ENCODE measurements at regions of chr10 and their contacts with region 1.

Region 1: DNA sequence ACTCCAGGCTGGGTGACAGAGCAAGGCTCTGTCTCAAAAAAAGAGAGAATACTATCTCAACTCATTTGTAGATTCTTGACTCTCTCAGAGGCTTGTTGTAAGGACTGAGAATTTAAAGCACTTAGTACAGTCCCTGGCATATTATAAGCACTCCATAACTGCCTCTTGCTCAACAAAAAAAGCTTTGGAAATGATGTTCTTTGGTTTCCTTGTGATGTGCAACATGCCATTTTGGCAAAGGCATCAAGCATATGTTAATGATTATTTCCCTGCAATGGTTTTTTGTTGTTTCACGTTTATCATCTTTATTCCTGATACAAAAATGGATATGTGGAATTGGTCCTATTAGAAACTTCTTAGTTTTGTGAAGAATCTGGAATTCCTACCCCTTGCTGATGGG is 15.7 kb downstream of the NOLC1 start:
- DNase-seq: no peak
- ATAC-seq: no peak
- H3K4me3 Mint-ChIP-seq: no peak overlapping the region
- H3K27ac Mint-ChIP-seq: no peak overlapping the region
- H3K4me1 Mint-ChIP-seq: peaks cover 15% of the 10 kb centered on the region
- H3K27me3 Mint-ChIP-seq: no peaks in the 10 kb centered on the region

Region 2: DNA sequence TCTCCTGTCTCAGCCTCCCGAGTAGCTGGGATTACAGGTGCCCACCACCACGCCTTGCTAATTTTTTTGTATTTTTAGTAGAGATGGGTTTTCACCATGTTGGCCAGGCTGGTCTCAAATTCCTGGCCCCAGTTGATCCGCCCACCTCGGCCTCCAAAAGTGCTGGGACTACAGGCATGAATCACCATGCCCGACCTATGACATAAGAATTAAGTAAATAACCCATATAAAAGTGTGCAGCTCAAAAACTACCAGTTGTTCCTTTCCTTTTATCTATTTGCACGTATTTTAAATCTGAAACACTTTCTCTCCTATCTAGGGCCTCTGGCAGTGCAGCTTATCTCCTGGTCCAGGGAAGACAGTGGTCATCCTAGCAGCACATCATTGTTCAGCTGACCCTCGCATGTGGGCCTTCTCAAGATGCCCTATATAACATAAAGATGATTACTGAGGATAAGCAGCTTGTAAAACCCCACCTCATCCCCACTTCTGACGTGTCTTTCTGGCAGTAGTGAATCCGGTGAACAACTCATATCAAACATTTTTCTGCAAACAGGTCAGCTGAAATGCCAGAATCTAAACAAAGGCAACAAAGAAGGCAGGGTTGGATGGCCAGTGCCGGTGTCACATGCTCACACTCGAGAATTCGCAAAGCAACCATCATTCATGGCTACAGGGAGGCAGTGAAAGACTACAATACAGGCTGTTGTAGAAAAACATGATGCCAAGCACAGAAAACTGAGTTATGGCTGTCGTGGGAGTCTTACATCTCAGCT is 288.2 kb before region 1 on chr10:
- CTCF ChIA-PET with region 1: no interaction called
- DNase-seq: no peak
- ATAC-seq: no peak
- H3K4me3 Mint-ChIP-seq: no peak overlapping the region
- H3K27ac Mint-ChIP-seq: no peak overlapping the region
- H3K4me1 Mint-ChIP-seq: peaks cover 19% of the 10 kb centered on the region
- H3K27me3 Mint-ChIP-seq: no peaks in the 10 kb centered on the region

Region 3: GRCh38 chr10:101941871-101942270 is 226.0 kb before region 1 on chr10:
- CTCF ChIA-PET with region 1: no interaction called
- DNase-seq: no peak
- ATAC-seq: no peak
- H3K4me3 Mint-ChIP-seq: no peak overlapping the region
- H3K27ac Mint-ChIP-seq: no peak overlapping the region
- H3K4me1 Mint-ChIP-seq: no peaks in the 10 kb centered on the region
- H3K27me3 Mint-ChIP-seq: no peaks in the 10 kb centered on the region

Region 4: GRCh38 chr10:102090772-102091171 is 77.1 kb before region 1 on chr10:
- CTCF ChIA-PET with region 1: no interaction called
- DNase-seq: no peak
- ATAC-seq: no peak
- H3K4me3 Mint-ChIP-seq: no peak overlapping the region
- H3K27ac Mint-ChIP-seq: no peak overlapping the region
- H3K4me1 Mint-ChIP-seq: no peaks in the 10 kb centered on the region
- H3K27me3 Mint-ChIP-seq: no peaks in the 10 kb centered on the region

Region 5: GRCh38 chr10:102132563-102133372 is 35.1 kb before region 1 on chr10 and contains the start of gene PPRC1:
- CTCF ChIA-PET with region 1: interaction called, 10 read pairs
- DNase-seq: peak; percentile 99
- ATAC-seq: peak; percentile 94
- H3K4me3 Mint-ChIP-seq: peak within 1 kb of the TSS; percentile 93
- H3K27ac Mint-ChIP-seq: peak within 1 kb of the TSS; percentile 96
- H3K4me1 Mint-ChIP-seq: peaks cover 38% of the 10 kb centered on the region
- H3K27me3 Mint-ChIP-seq: no peaks in the 10 kb centered on the region
- total RNA-seq, gene PPRC1: 57.9 to 79.0 TPM

Region 6: GRCh38 chr10:102185811-102186527 is 18.1 kb after region 1 on chr10:
- CTCF ChIA-PET with region 1: interaction called, 50 read pairs
- DNase-seq: no peak
- ATAC-seq: no peak
- H3K4me3 Mint-ChIP-seq: no peak overlapping the region
- H3K27ac Mint-ChIP-seq: no peak overlapping the region
- H3K4me1 Mint-ChIP-seq: peaks cover 14% of the 10 kb centered on the region
- H3K27me3 Mint-ChIP-seq: peaks cover 1% of the 10 kb centered on the region

Region 7: DNA sequence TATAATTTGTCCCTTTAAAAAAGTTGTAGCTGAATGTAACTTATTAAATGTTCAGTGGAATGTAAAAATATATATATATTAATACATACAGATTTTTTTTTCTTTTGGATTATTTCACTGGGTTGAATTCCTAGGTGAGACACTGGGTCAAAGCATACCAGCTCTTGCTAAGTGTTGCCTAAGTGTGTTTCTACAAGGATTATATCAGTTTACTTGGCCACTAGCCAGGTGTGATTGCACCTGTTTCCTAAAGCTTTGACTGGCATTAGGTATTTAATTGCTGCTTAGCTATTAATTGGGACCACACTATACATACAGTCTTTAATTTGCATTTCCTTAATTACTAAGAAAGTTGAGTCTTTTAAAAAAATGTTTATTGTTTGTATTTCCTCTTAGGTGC is 52.8 kb after region 1 on chr10:
- CTCF ChIA-PET with region 1: interaction called, 169 read pairs
- DNase-seq: no peak
- ATAC-seq: no peak
- H3K4me3 Mint-ChIP-seq: no peak overlapping the region
- H3K27ac Mint-ChIP-seq: no peak overlapping the region
- H3K4me1 Mint-ChIP-seq: peaks cover 2% of the 10 kb centered on the region
- H3K27me3 Mint-ChIP-seq: peaks cover 34% of the 10 kb centered on the region

Region 8: GRCh38 chr10:102408728-102409603 is 241.1 kb after region 1 on chr10:
- CTCF ChIA-PET with region 1: interaction called, 17 read pairs
- DNase-seq: peak; percentile 65
- ATAC-seq: peak; percentile 57
- H3K4me3 Mint-ChIP-seq: peak overlapping the region; percentile 42
- H3K27ac Mint-ChIP-seq: no peak overlapping the region
- H3K4me1 Mint-ChIP-seq: peaks cover 29% of the 10 kb centered on the region
- H3K27me3 Mint-ChIP-seq: peaks cover 42% of the 10 kb centered on the region

Region 9: DNA sequence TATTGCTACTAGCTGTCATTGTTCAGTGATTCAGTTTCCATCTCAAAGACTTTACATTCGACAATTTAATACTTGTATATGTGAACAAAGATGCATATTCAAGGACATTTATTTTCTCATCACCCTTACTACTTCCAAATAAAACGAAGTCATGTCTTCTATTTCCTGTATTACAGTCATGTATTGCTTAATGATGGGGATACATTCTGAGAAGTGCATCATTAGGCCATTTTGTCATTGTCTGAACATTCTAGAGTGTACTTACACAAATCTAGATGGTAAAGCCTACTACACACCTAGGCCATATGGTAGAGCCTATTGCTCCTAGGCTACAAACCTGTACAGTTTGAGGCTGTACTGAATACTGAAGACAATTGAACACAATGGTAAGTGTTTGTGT is 277.0 kb after region 1 on chr10:
- CTCF ChIA-PET with region 1: no interaction called
- DNase-seq: no peak
- ATAC-seq: no peak
- H3K4me3 Mint-ChIP-seq: no peak overlapping the region
- H3K27ac Mint-ChIP-seq: no peak overlapping the region
- H3K4me1 Mint-ChIP-seq: peaks cover 10% of the 10 kb centered on the region
- H3K27me3 Mint-ChIP-seq: no peaks in the 10 kb centered on the region